Activated CD4-positive, alpha-beta T cell treated with anti-CD3 and anti-CD28 coated beads, Interleukin-2, amount 10 ng/mL, durations not matched to agents 24 days and 14 days (primary cell): ENCODE measurements at regions of chr7 and their contacts with region 1.

Region 1: GRCh38 chr7:107725151-107725740 is 18.7 kb upstream of the CBLL1 start:
- DNase-seq: peak; percentile 84
- H3K4me3 Mint-ChIP-seq: no peak overlapping the region
- H3K27ac Mint-ChIP-seq: no peak overlapping the region
- H3K4me1 Mint-ChIP-seq: no peaks in the 10 kb centered on the region
- H3K27me3 Mint-ChIP-seq: peaks cover 30% of the 10 kb centered on the region

Region 2: GRCh38 chr7:107150375-107151073 is 574.7 kb before region 1 on chr7:
- intact Hi-C with region 1: loop called (anchors 2 kb)
- DNase-seq: peak; percentile 91
- H3K4me3 Mint-ChIP-seq: no peak overlapping the region
- H3K27ac Mint-ChIP-seq: no peak overlapping the region
- H3K4me1 Mint-ChIP-seq: peaks cover 5% of the 10 kb centered on the region
- H3K27me3 Mint-ChIP-seq: peaks cover 7% of the 10 kb centered on the region

Region 3: GRCh38 chr7:107462740-107463444 is 262.4 kb before region 1 on chr7:
- intact Hi-C with region 1: loop called (anchors 1 kb)
- DNase-seq: peak; percentile 84
- H3K4me3 Mint-ChIP-seq: no peak overlapping the region
- H3K27ac Mint-ChIP-seq: no peak overlapping the region
- H3K4me1 Mint-ChIP-seq: no peaks in the 10 kb centered on the region
- H3K27me3 Mint-ChIP-seq: no peaks in the 10 kb centered on the region

Region 4: DNA sequence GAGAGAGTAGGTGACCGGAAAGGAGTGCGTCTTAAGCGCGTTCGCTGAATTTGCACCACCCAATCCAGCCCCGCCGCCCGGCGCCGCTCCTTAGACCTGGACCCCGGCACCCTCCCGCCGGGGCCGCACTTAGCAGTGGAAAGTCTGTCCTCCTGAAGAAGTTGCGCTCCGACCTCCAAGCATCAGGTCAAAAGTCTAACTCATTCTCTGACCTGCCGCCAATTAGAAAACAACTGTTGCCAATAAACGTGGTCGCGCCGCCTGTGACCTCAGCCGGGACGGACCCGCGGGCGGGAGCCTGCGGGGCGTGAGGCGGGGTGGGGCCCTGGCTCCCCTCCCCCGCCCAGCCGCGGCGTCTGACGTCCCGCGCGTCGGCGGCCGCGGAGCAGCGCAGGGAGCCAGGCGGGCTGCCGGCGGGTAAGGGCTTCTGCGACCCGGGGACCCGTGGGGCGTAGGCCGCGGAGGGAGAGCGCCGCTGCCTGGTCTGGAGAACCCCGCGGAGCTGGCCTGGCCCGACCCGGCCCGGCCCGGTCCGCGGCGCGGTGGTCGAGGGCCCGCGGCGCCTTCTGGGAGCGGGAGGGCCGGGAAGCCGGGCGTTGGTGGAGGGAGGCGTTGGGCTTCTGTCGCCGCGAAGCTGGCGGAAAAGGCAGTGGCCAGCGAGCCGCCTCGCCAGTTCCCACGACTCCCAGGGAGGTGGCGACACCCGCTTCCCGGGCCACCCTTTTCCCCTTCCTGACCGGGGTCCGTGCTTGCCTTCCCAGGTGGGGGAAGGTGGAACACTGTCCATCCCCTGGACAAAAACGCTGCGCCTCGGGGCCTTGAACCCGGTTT is 145.1 kb before region 1 on chr7 and contains the start of gene BCAP29:
- intact Hi-C with region 1: loop called (anchors 1 kb)
- DNase-seq: peak; percentile 92
- H3K4me3 Mint-ChIP-seq: peak within 1 kb of the TSS; percentile 91
- H3K27ac Mint-ChIP-seq: peak within 1 kb of the TSS; percentile 91
- H3K4me1 Mint-ChIP-seq: peaks cover 25% of the 10 kb centered on the region
- H3K27me3 Mint-ChIP-seq: no peaks in the 10 kb centered on the region
- total RNA-seq, gene BCAP29: 43.6 and 52.0 TPM in 2 replicates